ENCODE measurements at regions of chr5 and their contacts with region 1.

Region 1: GRCh38 chr5:176447982-176448608 is at the start of gene FAF2:
- DNase-seq: peak; percentile 96 to 98 (median 97)
- ATAC-seq: peak; percentile 99
- H3K4me3 ChIP-seq: peak within 1 kb of the TSS; percentile 78 to 99 (median 90)
- H3K27ac ChIP-seq: peak within 1 kb of the TSS; percentile 85 to 99 (median 94)
- H3K4me1 ChIP-seq: peaks cover 4 to 45% (median 21%) of the 10 kb centered on the region in 12 donors
- H3K27me3 ChIP-seq: no peaks in the 10 kb centered on the region
- CTCF ChIP-seq: peak; percentile 98 to 100 (median 99)
- POLR2A ChIP-seq: peak; percentile 46 to 72
- total RNA-seq, gene FAF2: 11.6 to 20.8 (median 13.6) TPM

Region 2: DNA sequence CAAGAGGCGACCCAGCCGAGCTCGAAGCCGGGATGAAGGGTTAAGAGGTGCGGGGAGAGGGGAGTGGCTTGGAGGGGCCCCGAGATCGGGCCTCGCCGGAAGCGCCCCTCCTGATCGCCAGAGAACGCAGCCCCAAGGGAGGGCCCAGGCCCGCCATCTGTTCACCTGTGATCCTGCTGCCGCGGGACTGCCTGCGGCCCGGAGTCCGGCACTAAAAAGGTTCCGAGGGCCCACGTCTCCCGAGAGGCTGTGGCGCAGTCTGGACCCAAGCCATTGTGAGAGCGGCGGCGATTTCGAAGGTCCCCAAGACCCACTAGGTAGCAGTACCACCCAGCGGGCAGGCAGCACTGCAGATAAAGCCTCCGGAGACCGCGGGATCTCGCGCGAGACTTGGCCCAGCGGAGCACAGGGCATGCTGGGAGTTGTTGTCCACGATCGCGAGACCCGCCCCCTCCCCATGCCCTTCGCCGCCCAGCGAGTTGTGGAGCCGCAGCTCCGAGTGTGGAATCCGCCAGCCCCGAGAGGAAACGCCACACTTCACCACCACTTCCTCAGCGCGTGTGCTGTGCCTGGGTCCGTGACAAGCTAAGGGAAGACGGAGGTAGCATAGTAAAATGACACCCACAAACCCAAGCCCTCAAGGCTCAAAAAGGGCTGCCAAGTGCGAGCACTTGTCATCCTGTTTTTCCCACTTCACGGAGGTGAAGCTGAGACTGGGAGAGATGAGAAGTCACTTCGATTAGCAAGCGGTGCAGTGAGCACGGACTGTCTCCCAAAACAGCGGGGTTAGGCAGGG is 86.5 kb before region 1 on chr5 and contains the start of gene KIAA1191:
- intact Hi-C with region 1: loop called in 1 of 10 experiments (anchors 5 kb)
- DNase-seq: peak; percentile 95 to 98 (median 97)
- ATAC-seq: peak; percentile 96 to 99 (median 97)
- H3K4me3 ChIP-seq: peak within 1 kb of the TSS; percentile 57 to 100 (median 87)
- H3K27ac ChIP-seq: peak within 1 kb of the TSS; percentile 28 to 91 (median 85)
- H3K4me1 ChIP-seq: peaks cover 0 to 40% (median 21%) of the 10 kb centered on the region in 12 donors
- H3K27me3 ChIP-seq: no peaks in the 10 kb centered on the region
- CTCF ChIP-seq: peak in 6 of 12 donors; percentile 9 to 48 (median 36)
- POLR2A ChIP-seq: peak; percentile 31 to 95
- total RNA-seq, gene KIAA1191: 68.4 to 143 (median 104) TPM

Region 3: DNA sequence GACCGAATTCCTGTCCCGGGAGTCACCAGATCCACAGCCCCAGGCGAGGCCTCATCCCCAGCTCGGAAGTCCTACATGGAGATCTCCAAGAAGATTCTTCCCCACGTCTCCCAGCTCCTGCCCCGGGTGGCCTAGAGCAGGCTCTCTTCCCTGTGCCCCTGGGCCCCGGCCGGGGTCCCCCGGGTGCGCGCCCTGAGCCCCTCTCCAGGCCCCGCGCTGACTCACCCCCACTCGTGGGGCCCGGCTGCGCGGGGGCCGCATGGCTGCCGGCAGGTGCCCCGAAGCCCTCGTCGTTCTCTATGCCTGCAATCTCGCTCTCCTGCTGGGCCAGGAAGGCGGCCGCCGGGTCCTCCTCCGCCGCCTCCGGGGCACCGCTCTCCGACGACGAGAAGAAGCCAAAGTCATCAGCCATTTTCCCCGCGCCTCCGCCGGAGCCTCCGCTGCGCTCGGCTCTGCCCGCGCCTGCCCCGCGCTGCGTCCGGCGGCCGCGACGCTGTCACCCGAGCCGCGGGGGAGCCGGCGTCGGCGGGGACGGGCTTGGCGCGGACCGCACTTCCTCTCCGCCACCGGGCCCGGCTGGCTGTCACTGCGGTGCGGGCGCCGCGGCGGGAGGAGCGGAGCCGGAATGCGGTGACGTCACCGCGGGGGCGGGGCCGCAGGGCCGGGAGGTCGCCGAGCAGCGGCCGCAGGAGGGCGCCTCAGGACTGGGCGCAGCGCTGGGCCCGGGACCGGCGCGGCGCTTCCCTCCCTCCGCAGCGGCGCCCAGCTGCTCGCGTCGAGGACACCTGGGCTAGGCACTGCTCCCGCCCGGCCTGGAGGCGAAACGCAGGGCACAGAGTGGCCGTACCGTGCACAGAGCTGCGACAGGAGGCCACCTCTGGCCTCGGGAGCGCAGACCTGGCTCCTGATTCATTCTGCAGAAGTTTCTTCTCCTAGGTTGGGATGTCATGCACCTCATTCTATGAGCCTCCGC is 31.9 kb before region 1 on chr5 and contains the start of gene CLTB:
- intact Hi-C with region 1: loop called in 4 of 10 experiments (anchors 2 kb)
- DNase-seq: peak; percentile 92 to 97 (median 94)
- ATAC-seq: peak; percentile 90 to 94 (median 93)
- H3K4me3 ChIP-seq: peak within 1 kb of the TSS; percentile 47 to 100 (median 84)
- H3K27ac ChIP-seq: peak within 1 kb of the TSS; percentile 83 to 99 (median 96)
- H3K4me1 ChIP-seq: peaks cover 8 to 52% (median 42%) of the 10 kb centered on the region in 12 donors
- H3K27me3 ChIP-seq: no peaks in the 10 kb centered on the region
- CTCF ChIP-seq: peak; percentile 43 to 92 (median 83)
- POLR2A ChIP-seq: peak; percentile 85 to 93
- total RNA-seq, gene CLTB: 185 to 401 (median 231) TPM

Region 4: GRCh38 chr5:176529741-176530141 is 81.6 kb after region 1 on chr5:
- intact Hi-C with region 1: loop called in 1 of 10 experiments (anchors 2 kb)
- DNase-seq: no peak
- ATAC-seq: no peak
- H3K4me3 ChIP-seq: no peak overlapping the region
- H3K27ac ChIP-seq: peak overlapping the region in 1 of 12 donors; percentile 52
- H3K4me1 ChIP-seq: peaks cover 7 to 64% (median 42%) of the 10 kb centered on the region in 12 donors
- H3K27me3 ChIP-seq: no peaks in the 10 kb centered on the region
- CTCF ChIP-seq: no peak
- POLR2A ChIP-seq: no peak

Region 5: GRCh38 chr5:176537608-176538504 is 89.8 kb after region 1 on chr5:
- intact Hi-C with region 1: loop called in 9 of 10 experiments (anchors 1 to 10 kb)
- DNase-seq: peak; percentile 99
- ATAC-seq: peak; percentile 89 to 93 (median 90)
- H3K4me3 ChIP-seq: peak overlapping the region; percentile 56 to 98 (median 88)
- H3K27ac ChIP-seq: peak overlapping the region; percentile 92 to 100 (median 96)
- H3K4me1 ChIP-seq: peaks cover 15 to 77% (median 57%) of the 10 kb centered on the region in 12 donors
- H3K27me3 ChIP-seq: no peaks in the 10 kb centered on the region
- CTCF ChIP-seq: no peak
- POLR2A ChIP-seq: peak in 1 of 2 donors; percentile 39

Region 6: GRCh38 chr5:176543428-176544173 is 95.5 kb after region 1 on chr5:
- intact Hi-C with region 1: loop called in 8 of 10 experiments (anchors 2 to 10 kb)
- DNase-seq: peak; percentile 78 to 89 (median 81)
- ATAC-seq: peak; percentile 84 to 89 (median 88)
- H3K4me3 ChIP-seq: peak overlapping the region; percentile 41 to 82 (median 74)
- H3K27ac ChIP-seq: peak overlapping the region; percentile 66 to 98 (median 90)
- H3K4me1 ChIP-seq: peaks cover 0 to 50% (median 22%) of the 10 kb centered on the region in 12 donors
- H3K27me3 ChIP-seq: no peaks in the 10 kb centered on the region
- CTCF ChIP-seq: no peak
- POLR2A ChIP-seq: peak; percentile 28 to 66

Region 7: DNA sequence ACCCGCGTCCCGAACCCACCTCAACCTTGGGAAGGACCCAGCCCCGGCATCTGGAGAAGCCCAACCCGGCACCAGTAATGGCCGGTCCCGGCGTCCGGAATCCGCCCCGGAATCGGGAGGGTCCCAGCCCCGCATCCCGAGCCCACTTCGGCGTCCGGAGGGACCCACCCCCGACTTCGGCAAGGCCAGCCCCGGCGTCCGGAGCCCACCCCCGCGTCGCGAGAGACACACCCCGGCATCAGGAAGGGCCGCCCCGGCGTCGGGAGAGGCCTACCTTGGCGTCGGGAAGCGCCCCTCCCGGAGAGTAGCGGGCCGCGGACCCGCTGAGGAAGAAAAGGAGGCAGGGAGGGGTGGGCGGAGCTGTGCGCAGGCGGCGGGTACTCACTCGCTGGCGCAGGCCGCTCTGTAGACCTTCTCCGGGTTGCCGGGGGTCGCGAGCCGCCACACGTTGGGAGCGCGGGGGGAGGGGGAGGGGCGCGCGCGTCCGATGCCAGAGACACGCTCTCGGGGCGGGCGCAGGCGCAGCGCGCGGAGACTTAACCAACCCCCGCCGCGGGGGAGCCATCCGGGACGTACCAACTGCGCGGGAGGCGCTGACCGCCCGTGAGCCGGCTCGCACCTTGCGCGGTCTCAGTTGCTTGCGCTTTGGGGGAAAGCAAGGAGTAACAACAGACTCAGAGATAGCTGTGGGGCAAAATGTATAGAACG is 558.3 kb after region 1 on chr5 and contains the start of gene UIMC1:
- intact Hi-C with region 1: loop called in 1 of 10 experiments (anchors 5 kb)
- DNase-seq: peak; percentile 92 to 96 (median 92)
- ATAC-seq: peak; percentile 83 to 93 (median 92)
- H3K4me3 ChIP-seq: peak within 1 kb of the TSS; percentile 60 to 98 (median 92)
- H3K27ac ChIP-seq: peak within 1 kb of the TSS; percentile 88 to 98 (median 97)
- H3K4me1 ChIP-seq: peaks cover 0 to 26% (median 18%) of the 10 kb centered on the region in 12 donors
- H3K27me3 ChIP-seq: no peaks in the 10 kb centered on the region
- CTCF ChIP-seq: no peak
- POLR2A ChIP-seq: peak in 1 of 2 donors; percentile 44
- total RNA-seq, gene UIMC1: 22.6 to 40.2 (median 36.8) TPM